Activated CD4-positive, alpha-beta T cell treated with anti-CD3 and anti-CD28 coated beads, Interleukin-2, amount 10 ng/mL, durations not matched to agents 24 days and 14 days (primary cell): ENCODE measurements at regions of chr1 and their contacts with region 1.

Region 1: DNA sequence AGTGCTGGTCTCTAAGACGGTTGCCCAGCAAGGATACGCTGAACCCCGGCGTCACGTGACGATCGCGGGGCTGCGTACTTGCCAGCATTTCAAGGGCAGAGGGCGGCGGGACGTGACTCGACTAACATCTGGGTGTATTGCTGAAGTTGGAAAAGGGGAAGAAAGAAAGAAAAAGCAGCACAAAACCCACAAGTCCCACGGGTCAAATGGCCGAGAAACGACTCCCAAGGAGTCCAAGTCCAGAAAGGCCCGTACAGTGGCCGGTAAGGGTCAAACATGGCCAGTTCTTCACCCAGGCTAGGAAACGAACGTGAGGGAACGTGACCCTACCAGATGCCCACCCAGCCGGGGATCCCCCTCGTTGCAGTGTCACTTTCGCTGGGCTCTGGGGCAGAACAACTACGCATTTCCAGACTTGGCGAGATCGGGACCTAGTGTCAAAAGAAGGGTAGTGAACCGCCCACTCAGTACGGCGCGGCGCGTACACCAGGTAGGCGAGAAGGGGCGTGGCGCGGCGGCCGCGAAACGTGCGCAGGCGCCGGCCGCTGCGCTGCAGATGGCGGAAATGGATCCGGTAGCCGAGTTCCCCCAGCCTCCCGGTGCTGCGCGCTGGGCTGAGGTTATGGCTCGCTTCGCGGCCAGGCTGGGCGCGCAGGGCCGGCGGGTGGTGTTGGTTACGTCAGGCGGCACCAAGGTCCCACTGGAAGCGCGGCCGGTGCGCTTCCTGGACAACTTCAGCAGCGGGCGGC is at the starts of genes PPCS and ZMYND12:
- DNase-seq: peak; percentile 97
- H3K4me3 Mint-ChIP-seq: peak within 1 kb of the TSS; percentile 93
- H3K27ac Mint-ChIP-seq: peak within 1 kb of the TSS; percentile 98
- H3K4me1 Mint-ChIP-seq: peaks cover 23% of the 10 kb centered on the region
- H3K27me3 Mint-ChIP-seq: peaks cover 3% of the 10 kb centered on the region
- total RNA-seq, gene PPCS: 44.7 and 48.0 TPM in 2 replicates
- total RNA-seq, gene ZMYND12: 0.12 TPM in 1 of 2 replicates, not detected in the other

Region 2: DNA sequence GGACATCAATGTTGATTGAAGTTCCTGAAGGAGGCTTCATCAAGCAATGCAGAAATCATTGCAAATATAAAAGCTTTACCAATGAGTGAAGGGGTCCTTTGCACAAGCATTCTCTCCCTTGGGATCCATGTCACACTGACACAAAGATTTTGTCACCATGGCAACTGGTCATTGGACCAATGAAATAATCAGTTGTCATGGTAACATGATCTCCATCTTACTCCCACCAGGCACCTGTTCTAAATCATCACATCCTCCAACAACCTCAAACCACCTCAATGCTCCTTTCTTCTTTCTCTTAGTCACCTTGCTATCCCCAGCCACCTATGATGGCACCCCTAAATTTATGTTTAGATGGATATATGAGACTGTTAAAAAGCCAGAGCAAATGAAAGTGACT is 107.7 kb before region 1 on chr1:
- intact Hi-C with region 1: no loop called
- DNase-seq: no peak
- H3K4me3 Mint-ChIP-seq: no peak overlapping the region
- H3K27ac Mint-ChIP-seq: no peak overlapping the region
- H3K4me1 Mint-ChIP-seq: no peaks in the 10 kb centered on the region
- H3K27me3 Mint-ChIP-seq: peaks cover 32% of the 10 kb centered on the region

Region 3: GRCh38 chr1:42392967-42393848 is 63.0 kb before region 1 on chr1:
- intact Hi-C with region 1: loop called (anchors 5 kb)
- DNase-seq: no peak
- H3K4me3 Mint-ChIP-seq: no peak overlapping the region
- H3K27ac Mint-ChIP-seq: peak overlapping the region; percentile 15
- H3K4me1 Mint-ChIP-seq: peaks cover 10% of the 10 kb centered on the region
- H3K27me3 Mint-ChIP-seq: no peaks in the 10 kb centered on the region

Region 4: DNA sequence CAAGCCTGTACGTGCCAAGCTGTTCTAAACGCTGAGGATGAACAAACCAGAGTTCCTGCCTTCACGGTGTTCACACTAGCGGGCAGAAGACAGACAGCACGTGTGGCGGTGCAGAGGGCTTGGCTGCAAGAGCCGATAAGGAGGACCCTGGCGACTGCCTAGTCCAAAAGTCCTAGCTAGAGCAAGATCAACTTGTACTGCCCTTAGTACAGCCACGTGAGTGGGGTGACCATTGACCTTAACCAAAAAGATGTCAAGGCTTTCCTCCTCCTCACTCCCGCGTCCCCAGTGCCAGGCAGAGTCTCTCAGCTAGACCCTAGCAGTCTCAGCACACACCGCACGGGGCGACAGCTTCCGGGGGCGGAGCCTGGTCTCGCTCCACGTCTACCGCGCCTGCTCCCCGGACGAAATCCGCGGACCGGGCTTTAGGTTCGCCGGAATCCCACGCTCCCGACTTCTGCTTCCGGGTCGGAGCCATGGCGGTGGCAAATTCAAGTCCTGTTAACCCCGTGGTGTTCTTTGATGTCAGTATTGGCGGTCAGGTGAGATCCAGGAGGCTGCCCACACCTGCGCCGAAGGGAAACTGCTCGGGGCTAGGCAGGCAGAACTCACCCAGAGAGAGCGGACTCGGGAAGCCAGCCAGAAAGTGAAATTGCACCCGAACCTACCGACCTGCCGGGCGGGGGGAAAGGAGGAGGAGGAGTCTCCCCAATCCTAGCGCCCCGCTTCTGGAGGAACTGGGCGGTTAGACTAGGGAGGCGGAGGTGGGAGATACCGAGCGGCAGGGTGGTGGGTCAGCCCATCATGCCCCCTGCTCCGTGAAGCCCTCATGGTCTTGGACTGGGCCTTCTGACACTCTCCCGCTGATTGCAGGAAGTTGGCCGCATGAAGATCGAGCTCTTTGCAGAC is 202.0 kb after region 1 on chr1 and contains the start of gene PPIH:
- intact Hi-C with region 1: loop called (anchors 1 kb)
- DNase-seq: peak; percentile 99
- H3K4me3 Mint-ChIP-seq: peak within 1 kb of the TSS; percentile 97
- H3K27ac Mint-ChIP-seq: peak within 1 kb of the TSS; percentile 98
- H3K4me1 Mint-ChIP-seq: peaks cover 34% of the 10 kb centered on the region
- H3K27me3 Mint-ChIP-seq: peaks cover 4% of the 10 kb centered on the region
- total RNA-seq, gene PPIH: 88.4 and 92.9 TPM in 2 replicates